ENCODE measurements at regions of chr3 and their contacts with region 1.

Region 1: GRCh38 chr3:71006810-71007785 is 576.4 kb downstream of the FOXP1 start:
- DNase-seq: peak in 5 of 9 donors; percentile 25 to 45 (median 40)
- ATAC-seq: peak; percentile 54
- H3K4me3 ChIP-seq: no peak overlapping the region
- H3K4me3 Mint-ChIP-seq: peak overlapping the region in 5 of 10 donors; percentile 34 to 62 (median 49)
- H3K27ac ChIP-seq: peak overlapping the region; percentile 74
- H3K27ac Mint-ChIP-seq: peak overlapping the region in 8 of 9 donors; percentile 40 to 91 (median 87)
- H3K4me1 ChIP-seq: peaks cover 20 to 49% of the 10 kb centered on the region in 2 donors
- H3K4me1 Mint-ChIP-seq: peaks cover 35 to 84% (median 75%) of the 10 kb centered on the region in 7 donors
- H3K27me3 ChIP-seq: no peaks in the 10 kb centered on the region
- H3K27me3 Mint-ChIP-seq: no peaks in the 10 kb centered on the region

Region 2: DNA sequence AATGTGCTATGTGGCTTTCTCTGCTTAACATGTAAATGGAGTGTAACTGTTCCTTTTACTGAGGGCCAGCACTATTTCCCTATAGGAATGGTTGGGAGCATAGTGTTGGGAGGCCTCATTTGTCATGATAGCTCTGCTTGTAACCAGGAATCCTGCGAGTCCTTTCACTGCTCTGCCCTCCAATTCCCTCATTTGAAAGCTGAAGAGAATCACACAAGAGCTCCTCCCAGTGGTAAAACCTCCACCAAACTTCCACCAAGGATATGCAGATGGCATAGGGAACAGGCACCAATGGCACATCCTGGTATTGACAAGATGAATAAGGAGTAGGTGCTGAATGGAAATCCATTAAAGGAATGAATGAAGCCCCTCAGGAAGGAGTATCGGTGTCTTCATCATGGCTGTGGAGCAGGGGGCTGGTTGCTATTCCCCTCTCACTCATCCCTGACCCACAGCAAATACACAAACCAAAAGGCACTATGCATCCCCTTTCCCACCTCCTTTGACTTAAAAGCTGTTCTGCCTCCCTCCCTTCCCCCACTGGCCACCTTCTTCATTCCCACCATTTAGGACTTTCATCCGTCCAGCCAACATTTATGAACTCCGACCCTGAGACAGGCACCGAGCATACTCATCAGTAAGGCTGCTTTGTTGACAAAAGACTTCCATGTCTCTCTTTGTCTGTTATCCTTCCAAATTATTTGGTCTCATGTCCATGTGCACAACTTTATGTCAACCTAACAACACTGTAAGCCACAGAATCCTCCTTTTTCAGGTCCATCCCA is 15.6 kb after region 1 on chr3:
- CTCF ChIA-PET with region 1: no interaction called
- POLR2A ChIA-PET with region 1: no interaction called
- intact Hi-C with region 1: loop called in 1 of 2 experiments (anchors 1 kb)
- DNase-seq: no peak
- ATAC-seq: no peak
- H3K4me3 ChIP-seq: no peak overlapping the region
- H3K4me3 Mint-ChIP-seq: peak overlapping the region in 2 of 10 donors; percentile 6 to 32
- H3K27ac ChIP-seq: no peak overlapping the region
- H3K27ac Mint-ChIP-seq: peak overlapping the region in 8 of 9 donors; percentile 12 to 85 (median 72)
- H3K4me1 ChIP-seq: peaks cover 0 to 43% of the 10 kb centered on the region in 2 donors
- H3K4me1 Mint-ChIP-seq: peaks cover 37 to 94% (median 85%) of the 10 kb centered on the region in 7 donors
- H3K27me3 ChIP-seq: no peaks in the 10 kb centered on the region
- H3K27me3 Mint-ChIP-seq: no peaks in the 10 kb centered on the region

Region 3: GRCh38 chr3:71050538-71051258 is 43.6 kb after region 1 on chr3:
- CTCF ChIA-PET with region 1: interaction called, 3 read pairs
- POLR2A ChIA-PET with region 1: interaction called, 4 read pairs
- intact Hi-C with region 1: loop called in 1 of 2 experiments (anchors 1 kb)
- DNase-seq: peak in 7 of 9 donors; percentile 52 to 82 (median 75)
- ATAC-seq: peak; percentile 97
- H3K4me3 ChIP-seq: no peak overlapping the region
- H3K4me3 Mint-ChIP-seq: peak overlapping the region in 8 of 10 donors; percentile 45 to 83 (median 64)
- H3K27ac ChIP-seq: peak overlapping the region; percentile 71
- H3K27ac Mint-ChIP-seq: peak overlapping the region in 6 of 9 donors; percentile 78 to 99 (median 95)
- H3K4me1 ChIP-seq: peaks cover 24 to 98% of the 10 kb centered on the region in 2 donors
- H3K4me1 Mint-ChIP-seq: peaks cover 73 to 100% (median 100%) of the 10 kb centered on the region in 7 donors
- H3K27me3 ChIP-seq: no peaks in the 10 kb centered on the region
- H3K27me3 Mint-ChIP-seq: no peaks in the 10 kb centered on the region

Region 4: GRCh38 chr3:71087143-71088018 is 80.3 kb after region 1 on chr3:
- CTCF ChIA-PET with region 1: interaction called, 3 read pairs
- POLR2A ChIA-PET with region 1: no interaction called
- intact Hi-C with region 1: loop called in 1 of 2 experiments (anchors 1 kb)
- DNase-seq: peak in 8 of 9 donors; percentile 39 to 76 (median 58)
- ATAC-seq: peak; percentile 79
- H3K4me3 ChIP-seq: peak overlapping the region; percentile 7
- H3K4me3 Mint-ChIP-seq: peak overlapping the region; percentile 39 to 78 (median 70)
- H3K27ac ChIP-seq: peak overlapping the region; percentile 42
- H3K27ac Mint-ChIP-seq: peak overlapping the region; percentile 43 to 98 (median 92)
- H3K4me1 ChIP-seq: peaks cover 34 to 69% of the 10 kb centered on the region in 2 donors
- H3K4me1 Mint-ChIP-seq: peaks cover 61 to 94% (median 89%) of the 10 kb centered on the region in 7 donors
- H3K27me3 ChIP-seq: no peaks in the 10 kb centered on the region
- H3K27me3 Mint-ChIP-seq: no peaks in the 10 kb centered on the region

Region 5: DNA sequence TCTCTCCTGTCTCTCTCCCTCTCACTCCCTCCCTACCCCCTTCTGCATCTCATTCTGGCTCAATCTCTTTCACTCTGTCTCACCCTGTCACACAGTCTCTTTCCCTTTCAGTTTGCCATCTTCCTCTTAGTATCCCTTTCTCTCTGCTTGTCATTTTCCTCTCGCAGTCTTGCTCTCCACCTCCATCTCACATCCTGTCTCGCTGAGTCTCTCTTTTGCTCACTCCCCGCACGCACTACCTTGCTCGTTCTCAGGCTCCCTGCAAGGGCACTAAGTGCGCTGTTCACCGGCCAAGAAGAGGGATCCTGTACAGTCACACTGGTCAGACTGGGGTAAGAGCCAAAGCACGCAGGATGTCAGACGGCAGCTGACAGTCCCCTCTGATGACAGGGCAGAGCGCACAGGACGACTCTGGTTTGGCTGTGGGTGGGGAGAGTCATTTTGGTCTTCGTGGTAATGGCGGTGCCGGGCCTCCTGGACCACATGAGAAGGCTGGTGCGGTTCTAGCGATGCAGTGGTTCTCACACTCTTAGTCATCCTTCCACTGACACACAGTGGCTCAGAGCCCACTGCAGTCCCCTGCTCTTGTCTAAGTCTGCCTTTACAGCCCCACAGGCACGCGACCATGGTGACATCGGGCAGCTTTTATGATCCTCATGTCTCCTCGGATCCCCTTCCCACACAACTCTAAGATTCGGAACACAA is 219.6 kb after region 1 on chr3:
- CTCF ChIA-PET with region 1: no interaction called
- POLR2A ChIA-PET with region 1: no interaction called
- intact Hi-C with region 1: loop called (anchors 1 to 5 kb)
- DNase-seq: peak; percentile 34 to 89 (median 65)
- ATAC-seq: peak; percentile 86
- H3K4me3 ChIP-seq: peak overlapping the region; percentile 48
- H3K4me3 Mint-ChIP-seq: peak overlapping the region; percentile 51 to 85 (median 79)
- H3K27ac ChIP-seq: peak overlapping the region; percentile 59
- H3K27ac Mint-ChIP-seq: peak overlapping the region; percentile 85 to 97 (median 90)
- H3K4me1 ChIP-seq: peaks cover 21 to 64% of the 10 kb centered on the region in 2 donors
- H3K4me1 Mint-ChIP-seq: peaks cover 30 to 91% (median 88%) of the 10 kb centered on the region in 7 donors
- H3K27me3 ChIP-seq: no peaks in the 10 kb centered on the region
- H3K27me3 Mint-ChIP-seq: peaks cover 0 to 52% (median 0%) of the 10 kb centered on the region in 5 donors

Region 6: DNA sequence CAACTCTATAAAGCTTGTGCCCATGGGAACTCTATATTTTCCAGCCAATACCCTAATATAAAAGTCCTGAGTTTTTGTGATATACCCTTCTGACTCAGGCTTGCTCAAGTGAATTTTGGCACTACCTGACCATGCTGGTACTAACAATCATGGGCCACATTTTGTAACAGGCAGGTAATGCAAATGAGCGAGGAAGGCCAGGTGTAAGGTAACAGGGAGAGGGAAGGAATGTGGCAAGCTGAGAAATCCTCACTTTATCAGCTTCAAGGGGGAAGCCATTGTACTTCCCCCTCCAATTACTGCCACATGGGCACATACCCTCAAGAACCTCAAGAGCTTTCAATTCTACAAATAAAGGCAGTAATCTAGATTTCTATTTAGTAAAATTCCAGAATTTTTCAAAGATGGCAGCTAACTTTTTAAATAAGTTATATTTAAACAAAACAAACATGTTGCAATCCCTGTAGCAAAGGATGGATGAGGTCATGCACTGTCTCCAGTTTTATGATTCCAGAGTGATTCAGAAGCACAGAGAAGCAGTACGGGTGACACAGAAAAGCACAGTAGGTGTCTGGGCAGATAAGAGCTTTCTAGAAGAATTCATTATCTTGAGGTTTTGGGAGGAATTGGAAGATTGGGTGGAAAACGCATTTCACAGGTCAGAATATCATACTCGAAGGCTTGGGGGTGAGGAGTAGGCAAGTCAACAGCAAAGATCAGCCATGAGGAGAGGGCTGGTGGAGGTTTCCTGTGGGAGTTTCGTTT is 488.8 kb after region 1 on chr3:
- CTCF ChIA-PET with region 1: no interaction called
- POLR2A ChIA-PET with region 1: no interaction called
- intact Hi-C with region 1: loop called in 1 of 2 experiments (anchors 1 kb)
- DNase-seq: peak in 2 of 9 donors; percentile 24 to 34
- ATAC-seq: no peak
- H3K4me3 ChIP-seq: peak overlapping the region; percentile 33
- H3K4me3 Mint-ChIP-seq: peak overlapping the region; percentile 52 to 98 (median 80)
- H3K27ac ChIP-seq: peak overlapping the region; percentile 89
- H3K27ac Mint-ChIP-seq: peak overlapping the region; percentile 77 to 100 (median 98)
- H3K4me1 ChIP-seq: peaks cover 43 to 71% of the 10 kb centered on the region in 2 donors
- H3K4me1 Mint-ChIP-seq: peaks cover 54 to 90% (median 85%) of the 10 kb centered on the region in 7 donors
- H3K27me3 ChIP-seq: no peaks in the 10 kb centered on the region
- H3K27me3 Mint-ChIP-seq: no peaks in the 10 kb centered on the region

Measured in naive thymus-derived CD4-positive, alpha-beta T cell (primary cell).